Calu3 (cell line): ENCODE measurements at regions of chr7 and their contacts with region 1.

Region 1: DNA sequence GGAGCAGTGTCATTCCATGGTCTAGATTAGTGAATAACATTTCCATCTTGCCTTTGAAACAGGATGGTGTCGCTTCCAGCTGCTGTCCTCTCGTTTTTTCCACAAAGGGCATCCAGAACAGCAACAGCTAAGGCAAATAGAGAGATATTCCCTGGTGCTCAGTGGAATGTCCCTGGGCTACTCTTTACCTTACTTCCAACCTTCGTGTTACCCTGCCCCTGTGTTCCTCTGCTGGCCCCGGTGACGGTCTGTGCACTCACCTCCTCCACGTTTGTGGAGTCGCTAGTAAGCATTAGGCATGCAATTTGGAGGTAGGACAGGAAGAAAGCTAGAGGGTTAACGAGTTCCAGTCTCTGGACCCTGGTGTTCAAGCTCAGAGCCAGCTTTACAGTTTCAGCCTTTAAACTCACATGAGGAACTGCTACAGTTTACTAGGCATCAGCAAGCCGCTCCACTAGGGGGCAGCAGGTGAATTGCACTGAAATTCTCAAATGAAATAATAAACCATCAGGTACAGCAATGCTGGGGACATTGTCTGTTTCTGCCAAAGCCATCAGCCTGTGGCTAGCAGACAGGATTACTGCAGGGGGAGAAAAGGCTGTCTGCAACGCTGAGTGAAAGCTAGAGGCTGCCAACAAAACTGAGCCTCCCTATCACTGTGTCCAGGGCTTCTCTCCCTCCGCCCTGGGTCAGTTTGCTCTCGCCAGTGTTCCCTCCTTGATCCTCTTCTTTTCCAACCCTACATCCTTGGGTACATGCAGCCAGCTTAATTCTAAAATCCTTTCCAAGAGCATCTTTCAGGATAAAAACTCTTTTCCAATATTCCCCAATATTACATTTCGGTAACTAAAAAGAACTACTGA is 9.0 kb downstream of the MRPL32 start:
- DNase-seq: peak; percentile 88
- H3K4me3 Mint-ChIP-seq: no peak overlapping the region
- H3K27ac Mint-ChIP-seq: no peak overlapping the region
- H3K4me1 Mint-ChIP-seq: no peaks in the 10 kb centered on the region
- H3K27me3 Mint-ChIP-seq: no peaks in the 10 kb centered on the region
- CTCF ChIP-seq: peak; percentile 91

Region 2: DNA sequence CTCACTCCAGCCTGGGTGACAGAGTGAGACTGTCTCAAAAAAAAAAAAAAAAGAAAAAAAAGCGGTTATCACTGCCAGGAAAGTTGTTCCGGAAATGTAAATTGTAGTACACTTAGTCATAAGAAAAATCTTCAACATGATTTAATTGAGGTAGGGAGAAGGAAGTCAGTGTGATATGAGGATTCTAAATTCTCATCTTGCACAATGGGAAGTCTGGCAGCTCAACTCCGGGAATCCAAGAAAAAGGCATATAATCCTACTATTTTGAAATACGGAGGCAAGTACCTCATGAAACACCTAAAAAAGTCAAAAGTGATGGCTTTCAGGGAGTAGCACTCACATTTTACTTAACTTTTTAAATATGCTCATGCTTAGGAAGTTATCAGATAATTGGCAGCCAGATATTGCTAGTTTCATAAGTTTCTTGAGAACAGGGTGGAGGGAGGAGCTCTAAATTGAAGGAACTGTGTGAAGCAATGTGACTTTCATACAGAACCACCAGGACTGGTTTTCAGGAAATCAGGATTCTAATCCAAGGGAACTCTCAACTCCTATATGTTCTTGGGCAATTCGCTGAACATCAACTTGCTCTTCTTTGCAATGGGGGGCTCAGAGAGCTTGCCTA is 26.7 kb before region 1 on chr7:
- CTCF ChIA-PET with region 1: no interaction called
- intact Hi-C with region 1: no loop called
- DNase-seq: no peak
- H3K4me3 Mint-ChIP-seq: no peak overlapping the region
- H3K27ac Mint-ChIP-seq: no peak overlapping the region
- H3K4me1 Mint-ChIP-seq: peaks cover 36% of the 10 kb centered on the region
- H3K27me3 Mint-ChIP-seq: no peaks in the 10 kb centered on the region
- CTCF ChIP-seq: no peak

Region 3: GRCh38 chr7:43260980-43261878 is 320.0 kb after region 1 on chr7:
- CTCF ChIA-PET with region 1: interaction called, 7 read pairs
- intact Hi-C with region 1: loop called (anchors 1 kb)
- DNase-seq: peak; percentile 86
- H3K4me3 Mint-ChIP-seq: no peak overlapping the region
- H3K27ac Mint-ChIP-seq: no peak overlapping the region
- H3K4me1 Mint-ChIP-seq: no peaks in the 10 kb centered on the region
- H3K27me3 Mint-ChIP-seq: no peaks in the 10 kb centered on the region
- CTCF ChIP-seq: peak; percentile 95

Region 4: DNA sequence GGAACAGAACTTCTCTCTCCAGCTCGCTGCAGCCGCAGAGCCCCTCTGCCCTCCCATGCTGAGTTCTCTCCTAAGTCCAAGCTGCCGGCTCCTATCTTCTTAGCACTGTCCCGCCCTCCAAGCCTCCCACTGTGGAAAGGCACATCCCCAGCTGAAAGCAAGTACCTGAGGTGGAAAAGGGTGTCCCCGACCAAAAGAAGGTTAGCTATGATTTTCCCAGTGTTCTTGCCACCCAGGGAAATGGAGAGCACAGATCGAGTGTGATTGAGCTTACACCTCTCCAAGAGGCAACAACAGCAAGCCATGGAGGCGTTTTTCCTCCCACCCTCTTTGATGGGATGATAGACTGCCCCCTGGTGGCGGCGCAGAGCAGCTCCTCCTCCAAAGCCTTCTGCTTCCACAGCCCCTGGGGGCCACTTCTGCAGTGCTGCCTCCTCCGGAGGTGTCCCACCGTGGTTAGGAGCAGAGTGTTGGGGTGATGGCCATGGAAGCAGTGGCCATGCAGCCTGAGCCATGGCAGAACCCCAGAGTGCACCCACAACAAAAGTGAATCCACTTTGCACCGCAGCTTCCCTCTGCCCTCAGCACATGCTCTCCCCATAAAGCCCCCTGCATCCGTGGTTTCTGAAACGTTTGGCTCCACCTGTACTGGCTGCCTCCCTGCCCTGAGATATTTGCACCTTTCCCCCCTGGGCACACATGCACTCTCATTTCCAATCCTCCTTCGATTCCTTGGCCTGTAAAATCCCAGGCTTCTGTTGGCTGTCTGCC is 498.6 kb after region 1 on chr7:
- CTCF ChIA-PET with region 1: interaction called, 8 read pairs
- intact Hi-C with region 1: loop called (anchors 5 kb)
- DNase-seq: peak; percentile 74
- H3K4me3 Mint-ChIP-seq: peak overlapping the region; percentile 16
- H3K27ac Mint-ChIP-seq: no peak overlapping the region
- H3K4me1 Mint-ChIP-seq: no peaks in the 10 kb centered on the region
- H3K27me3 Mint-ChIP-seq: peaks cover 21% of the 10 kb centered on the region
- CTCF ChIP-seq: peak; percentile 99

Region 5: GRCh38 chr7:43479042-43479441 is 537.8 kb after region 1 on chr7:
- CTCF ChIA-PET with region 1: no interaction called
- intact Hi-C with region 1: loop called (anchors 5 kb)
- DNase-seq: no peak
- H3K4me3 Mint-ChIP-seq: no peak overlapping the region
- H3K27ac Mint-ChIP-seq: no peak overlapping the region
- H3K4me1 Mint-ChIP-seq: peaks cover 50% of the 10 kb centered on the region
- H3K27me3 Mint-ChIP-seq: no peaks in the 10 kb centered on the region
- CTCF ChIP-seq: peak; percentile 9

Region 6: DNA sequence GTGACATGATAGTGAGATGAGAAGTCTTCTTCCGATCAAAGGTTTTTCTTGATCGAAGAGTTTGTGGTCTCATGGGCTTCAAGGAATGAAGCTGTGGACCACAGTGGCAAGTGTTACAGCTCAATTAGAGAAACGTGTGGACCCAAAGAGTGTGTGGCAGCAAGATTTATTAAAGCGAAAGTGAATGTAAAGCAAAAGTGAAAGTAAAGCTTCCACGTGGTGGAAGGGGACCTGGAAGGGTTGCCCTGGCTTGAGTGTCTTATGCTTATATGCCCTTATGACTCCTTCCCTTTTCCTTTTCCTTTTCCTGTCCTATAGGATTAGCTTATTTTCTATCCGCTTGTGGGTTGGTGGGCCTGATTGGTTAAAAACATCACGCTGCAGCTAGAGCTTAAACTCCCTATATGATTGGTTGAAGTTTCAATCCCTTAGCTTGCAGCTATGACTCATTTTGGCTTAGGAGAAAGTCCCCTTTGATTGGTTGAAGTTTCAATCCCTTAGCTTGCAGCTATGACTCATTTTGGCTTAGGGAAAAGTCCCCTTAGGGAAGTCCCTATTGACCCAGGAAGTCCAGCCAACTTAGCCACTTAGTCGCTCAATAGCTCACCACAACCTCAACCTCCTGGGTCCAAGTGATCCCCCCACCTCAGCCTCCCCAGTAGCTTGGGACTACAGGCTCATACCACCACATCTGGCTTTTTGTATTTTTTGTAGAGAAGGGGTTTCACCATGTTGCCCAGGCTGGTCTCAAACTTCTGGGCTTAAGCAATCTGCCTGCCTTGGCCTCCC is 893.4 kb after region 1 on chr7:
- CTCF ChIA-PET with region 1: no interaction called
- intact Hi-C with region 1: loop called (anchors 5 kb)
- DNase-seq: no peak
- H3K4me3 Mint-ChIP-seq: peak overlapping the region; percentile 15
- H3K27ac Mint-ChIP-seq: peak overlapping the region; percentile 40
- H3K4me1 Mint-ChIP-seq: peaks cover 27% of the 10 kb centered on the region
- H3K27me3 Mint-ChIP-seq: no peaks in the 10 kb centered on the region
- CTCF ChIP-seq: no peak